Activated CD8-positive, alpha-beta T cell treated with anti-CD3 and anti-CD28 coated beads, Interleukin-2, amount 10 ng/mL, durations not matched to agents 7 days and 5 days (primary cell): ENCODE measurements at regions of chr5 and their contacts with region 1.

Region 1: DNA sequence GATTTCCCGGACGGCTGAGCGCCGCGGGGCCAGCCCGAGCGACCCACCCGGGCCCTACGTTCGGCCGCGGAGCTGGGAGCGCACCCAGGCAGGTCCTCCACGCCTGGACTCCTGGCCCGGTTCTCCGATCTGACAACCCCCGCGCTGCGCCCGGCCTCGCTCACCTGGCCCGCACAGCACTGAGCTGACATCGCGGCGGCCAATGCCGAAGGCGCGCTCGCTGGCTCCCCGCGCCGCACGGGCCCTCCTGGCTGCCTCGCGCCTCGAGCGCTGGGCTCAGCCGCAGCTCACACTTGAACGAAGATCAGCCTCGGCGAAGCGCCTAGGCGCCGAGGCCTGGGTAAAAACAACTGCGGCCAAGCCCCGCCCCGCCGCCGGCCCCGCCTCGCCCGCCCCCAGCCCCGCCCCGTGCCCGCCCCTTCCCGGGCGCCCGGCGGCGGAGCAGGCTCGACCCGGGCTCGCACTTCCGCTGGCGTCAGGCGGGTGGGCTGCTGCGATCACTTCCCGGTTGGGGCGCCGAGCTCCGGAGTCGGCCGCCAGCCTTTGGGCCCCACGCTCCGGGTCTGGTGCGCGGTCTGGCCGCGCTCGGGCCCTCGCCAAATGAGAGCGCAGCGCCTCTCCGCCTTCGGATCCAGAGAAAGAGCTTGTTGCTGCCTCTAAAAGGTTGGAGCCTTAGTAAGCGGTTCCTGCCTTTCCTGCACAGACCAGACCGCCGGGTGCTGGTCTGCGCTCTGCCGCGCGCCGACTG is at the start of gene SERINC5:
- DNase-seq: peak; percentile 88
- ATAC-seq: peak; percentile 80
- H3K4me3 Mint-ChIP-seq: peak within 1 kb of the TSS; percentile 92
- H3K27ac Mint-ChIP-seq: peak within 1 kb of the TSS; percentile 95
- H3K4me1 Mint-ChIP-seq: peaks cover 51% of the 10 kb centered on the region
- H3K27me3 Mint-ChIP-seq: no peaks in the 10 kb centered on the region
- total RNA-seq, gene SERINC5: 52.5 to 54.5 TPM

Region 2: GRCh38 chr5:79982136-79982535 is 273.8 kb before region 1 on chr5:
- CTCF ChIA-PET with region 1: no interaction called
- POLR2A ChIA-PET with region 1: no interaction called
- DNase-seq: no peak
- ATAC-seq: no peak
- H3K4me3 Mint-ChIP-seq: no peak overlapping the region
- H3K27ac Mint-ChIP-seq: peak overlapping the region; percentile 51
- H3K4me1 Mint-ChIP-seq: peaks cover 65% of the 10 kb centered on the region
- H3K27me3 Mint-ChIP-seq: no peaks in the 10 kb centered on the region

Region 3: DNA sequence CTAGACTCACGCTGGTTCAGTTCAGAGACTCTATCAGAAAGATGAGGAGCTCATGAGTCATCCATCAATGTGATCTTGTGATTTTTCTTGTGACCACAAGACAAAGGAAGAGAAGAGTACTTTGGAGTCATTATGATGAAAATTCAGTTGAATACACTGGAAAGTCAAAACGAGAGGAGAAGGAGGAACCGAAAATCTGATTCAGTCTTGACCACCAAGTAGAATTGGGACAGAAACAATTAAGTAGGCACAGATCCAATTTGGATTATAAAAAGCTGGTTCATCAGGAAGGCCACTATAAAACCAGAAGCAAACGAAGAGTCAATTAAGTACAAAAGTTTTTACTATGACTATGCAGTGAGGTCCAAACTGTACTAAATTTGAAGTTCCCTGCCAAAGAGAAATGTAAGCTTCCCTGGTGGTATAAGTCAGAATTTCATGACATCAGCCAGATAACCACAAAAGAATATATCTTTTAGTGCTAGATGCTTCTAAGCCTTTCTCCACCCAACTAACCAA is 129.9 kb before region 1 on chr5:
- CTCF ChIA-PET with region 1: interaction called, 4 read pairs
- POLR2A ChIA-PET with region 1: interaction called, 10 read pairs
- DNase-seq: no peak
- ATAC-seq: peak; percentile 84
- H3K4me3 Mint-ChIP-seq: peak overlapping the region; percentile 12
- H3K27ac Mint-ChIP-seq: peak overlapping the region; percentile 35
- H3K4me1 Mint-ChIP-seq: peaks cover 38% of the 10 kb centered on the region
- H3K27me3 Mint-ChIP-seq: no peaks in the 10 kb centered on the region

Region 4: GRCh38 chr5:80181618-80182211 is 74.2 kb before region 1 on chr5:
- CTCF ChIA-PET with region 1: interaction called, 8 read pairs
- POLR2A ChIA-PET with region 1: interaction called, 50 read pairs
- DNase-seq: peak; percentile 75
- ATAC-seq: peak; percentile 74
- H3K4me3 Mint-ChIP-seq: peak overlapping the region; percentile 50
- H3K27ac Mint-ChIP-seq: peak overlapping the region; percentile 92
- H3K4me1 Mint-ChIP-seq: peaks cover 82% of the 10 kb centered on the region
- H3K27me3 Mint-ChIP-seq: no peaks in the 10 kb centered on the region

Region 5: DNA sequence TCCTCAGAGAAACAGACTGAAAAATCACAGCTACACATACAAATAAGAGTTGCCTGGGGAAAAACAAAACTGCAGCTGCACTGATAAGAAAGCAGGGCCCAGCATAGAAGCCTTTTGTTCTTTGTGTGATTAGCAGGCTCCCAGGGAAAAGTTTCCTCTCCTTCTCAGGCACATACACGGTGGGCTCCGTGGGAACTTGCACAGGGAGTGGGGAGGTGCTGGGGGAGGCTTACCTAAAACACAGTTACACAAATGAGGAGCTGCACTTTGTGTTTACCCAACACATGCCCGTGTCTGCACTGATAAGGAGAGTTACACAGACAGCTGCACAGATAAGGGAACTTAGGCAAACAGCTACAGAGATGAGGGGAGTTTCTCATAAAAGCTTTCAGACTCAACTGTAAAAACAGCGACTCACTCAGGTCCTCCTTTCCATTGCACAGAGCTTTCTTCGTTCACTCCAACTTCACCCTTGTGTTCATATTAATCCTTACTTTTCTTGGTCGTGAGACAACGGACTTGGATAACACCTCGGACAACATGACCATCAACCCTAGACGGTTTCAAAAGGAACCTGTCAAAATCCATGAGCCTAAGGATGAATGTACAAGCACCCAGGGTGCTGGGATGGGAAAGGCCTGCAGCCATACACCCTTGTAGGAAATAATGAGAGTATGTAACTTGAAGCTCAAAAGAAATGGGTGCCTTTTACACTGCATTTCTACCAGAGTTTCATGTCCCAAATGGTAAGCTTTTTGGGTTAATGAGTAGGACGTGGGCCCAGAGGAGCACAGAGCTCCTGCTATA is 50.9 kb before region 1 on chr5:
- CTCF ChIA-PET with region 1: interaction called, 7 read pairs
- POLR2A ChIA-PET with region 1: interaction called, 11 read pairs
- DNase-seq: no peak
- ATAC-seq: peak; percentile 41
- H3K4me3 Mint-ChIP-seq: no peak overlapping the region
- H3K27ac Mint-ChIP-seq: peak overlapping the region; percentile 48
- H3K4me1 Mint-ChIP-seq: peaks cover 42% of the 10 kb centered on the region
- H3K27me3 Mint-ChIP-seq: no peaks in the 10 kb centered on the region

Region 6: DNA sequence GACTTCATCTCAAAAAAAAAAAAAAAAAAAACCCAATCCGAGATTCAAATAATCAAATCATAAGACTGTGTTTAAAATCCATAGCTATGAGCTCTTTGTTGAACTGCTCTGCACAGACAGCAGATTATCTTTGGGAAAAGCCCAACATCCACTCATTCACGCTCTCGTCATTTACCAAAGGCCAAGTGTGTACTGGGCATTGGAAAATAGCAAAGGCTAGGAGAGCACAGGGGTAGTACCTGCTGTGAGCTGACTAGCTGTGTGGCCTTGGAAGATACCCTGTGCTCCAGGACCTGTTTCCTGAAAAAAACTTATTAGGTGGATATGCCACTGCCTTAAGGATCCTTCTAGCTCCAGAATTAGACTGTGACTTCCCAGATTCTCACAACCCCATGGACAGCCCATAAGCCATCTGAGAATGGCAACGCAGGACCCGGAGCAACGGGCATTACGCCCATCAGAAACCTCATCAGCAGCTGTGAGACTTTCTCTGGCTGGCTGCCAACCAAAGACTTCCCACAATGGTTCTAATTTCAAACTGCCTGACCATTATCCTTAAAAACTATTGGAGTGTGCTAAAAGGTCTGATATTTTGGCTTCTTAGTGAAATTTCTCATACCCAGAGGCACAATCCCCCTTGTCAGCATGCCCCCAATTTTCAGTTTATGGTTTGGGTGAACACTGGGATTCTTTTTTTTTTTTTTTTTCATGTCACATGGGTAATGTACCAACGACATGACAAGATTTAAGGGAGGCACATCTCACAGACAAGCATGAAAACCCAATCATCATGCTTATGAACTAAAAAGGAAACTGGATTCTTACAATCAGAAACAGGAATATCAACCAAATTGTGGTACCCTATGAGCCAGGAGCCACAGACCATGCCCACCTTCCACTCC is 16.9 kb before region 1 on chr5:
- CTCF ChIA-PET with region 1: interaction called, 5 read pairs
- POLR2A ChIA-PET with region 1: interaction called, 15 read pairs
- DNase-seq: no peak
- ATAC-seq: no peak
- H3K4me3 Mint-ChIP-seq: no peak overlapping the region
- H3K27ac Mint-ChIP-seq: peak overlapping the region; percentile 46
- H3K4me1 Mint-ChIP-seq: peaks cover 58% of the 10 kb centered on the region
- H3K27me3 Mint-ChIP-seq: no peaks in the 10 kb centered on the region

Region 7: GRCh38 chr5:80284720-80285119 is 28.8 kb after region 1 on chr5:
- CTCF ChIA-PET with region 1: no interaction called
- POLR2A ChIA-PET with region 1: interaction called, 14 read pairs
- DNase-seq: peak; percentile 61
- ATAC-seq: peak; percentile 87
- H3K4me3 Mint-ChIP-seq: no peak overlapping the region
- H3K27ac Mint-ChIP-seq: peak overlapping the region; percentile 88
- H3K4me1 Mint-ChIP-seq: peaks cover 11% of the 10 kb centered on the region
- H3K27me3 Mint-ChIP-seq: no peaks in the 10 kb centered on the region